Activated CD4-positive, alpha-beta T cell treated with anti-CD3 and anti-CD28 coated beads, Interleukin-2, amount 10 ng/mL, durations not matched to agents 7 days and 5 days (primary cell): ENCODE measurements at regions of chr2 and their contacts with region 1.

Region 1: DNA sequence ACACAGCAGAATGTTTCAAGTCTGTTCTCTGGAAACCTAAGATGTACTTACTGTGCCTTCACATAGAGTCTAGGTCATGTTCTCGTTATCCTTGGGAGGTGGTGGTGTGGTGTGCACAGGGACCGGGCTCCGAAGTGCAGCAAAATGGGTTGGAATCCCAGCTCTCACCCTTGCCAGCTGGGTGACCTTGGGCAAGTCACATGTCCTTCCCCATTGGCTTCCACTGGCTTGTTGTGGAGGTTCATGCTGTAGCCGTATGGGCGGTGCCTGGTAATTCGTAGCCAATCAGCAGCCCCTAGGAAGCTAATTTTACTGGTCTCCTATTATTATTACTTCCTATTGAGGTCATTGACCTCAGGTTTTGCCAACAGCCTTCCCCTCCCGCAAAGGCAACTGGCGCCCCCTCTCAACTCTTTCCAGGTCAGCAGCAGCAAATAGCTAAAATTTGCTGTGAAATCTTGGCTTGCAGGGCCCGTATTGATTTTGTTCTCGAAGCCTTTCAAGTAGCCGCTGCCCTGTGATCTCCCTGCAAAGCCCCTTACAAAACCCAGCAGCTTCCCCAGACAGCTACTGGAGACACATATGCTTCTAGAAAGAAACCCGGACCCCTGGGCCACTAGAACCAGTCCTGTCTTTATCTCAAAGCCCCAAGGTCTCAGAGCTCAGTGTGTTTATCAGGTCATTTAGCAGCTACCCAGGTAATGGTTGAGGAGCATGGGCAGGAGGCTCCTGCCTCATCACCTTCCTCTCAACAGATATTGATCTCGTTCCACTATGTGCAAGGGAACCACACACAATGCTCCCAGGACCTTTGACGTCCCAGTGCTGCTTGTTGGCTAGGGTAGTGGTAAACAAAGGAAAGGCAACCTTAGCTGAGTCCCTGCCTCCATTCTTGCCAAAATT is 66.5 kb upstream of the SLC1A4 start:
- DNase-seq: no peak
- H3K4me3 Mint-ChIP-seq: no peak overlapping the region
- H3K27ac Mint-ChIP-seq: no peak overlapping the region
- H3K4me1 Mint-ChIP-seq: peaks cover 18% of the 10 kb centered on the region
- H3K27me3 Mint-ChIP-seq: no peaks in the 10 kb centered on the region

Region 2: DNA sequence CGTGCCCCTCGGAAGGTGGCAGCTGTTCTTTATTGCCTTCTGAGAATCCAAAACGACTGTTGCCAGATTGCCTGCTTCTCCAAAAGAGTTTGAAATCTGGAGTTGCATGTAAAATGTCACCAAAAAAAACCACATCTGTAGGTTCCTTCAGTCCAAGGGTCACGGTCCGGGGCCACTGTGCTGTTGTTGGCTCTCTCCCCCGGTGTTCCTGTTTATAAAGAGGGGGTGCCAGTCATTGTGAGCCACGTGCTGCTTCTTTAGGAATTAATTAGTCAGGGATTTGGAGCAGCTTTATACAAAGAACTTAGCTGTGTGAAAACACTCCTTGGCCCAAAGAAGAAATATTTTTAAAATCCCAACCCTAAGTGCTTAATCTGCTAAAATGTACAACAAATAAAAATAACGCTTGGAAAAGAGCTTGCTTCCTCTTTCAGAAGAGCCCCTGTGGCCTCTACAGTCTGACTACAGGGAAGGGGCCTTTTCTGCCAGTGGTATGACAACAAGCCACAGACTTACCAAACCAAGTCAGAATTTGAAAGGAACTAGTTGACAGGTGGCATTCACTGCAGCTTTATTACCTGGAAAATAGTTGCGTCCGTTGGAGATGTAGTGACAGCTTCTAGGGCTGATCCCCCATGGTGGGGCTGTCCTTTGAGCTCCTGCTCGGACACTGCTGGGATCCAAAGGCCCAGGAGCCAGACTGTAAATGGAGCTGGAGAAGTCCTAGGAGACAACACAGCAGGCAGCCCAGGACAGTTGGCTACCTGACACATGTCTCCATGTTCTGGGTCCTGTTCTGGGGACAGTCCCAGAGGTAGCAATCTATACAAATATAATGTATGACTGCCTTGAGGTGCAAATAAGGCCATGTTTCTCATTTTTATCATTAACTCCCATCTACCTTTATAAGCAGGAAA is 18.1 kb before region 1 on chr2:
- CTCF ChIA-PET with region 1: interaction called, 34 read pairs
- POLR2A ChIA-PET with region 1: no interaction called
- DNase-seq: no peak
- H3K4me3 Mint-ChIP-seq: no peak overlapping the region
- H3K27ac Mint-ChIP-seq: no peak overlapping the region
- H3K4me1 Mint-ChIP-seq: peaks cover 6% of the 10 kb centered on the region
- H3K27me3 Mint-ChIP-seq: peaks cover 12% of the 10 kb centered on the region

Region 3: DNA sequence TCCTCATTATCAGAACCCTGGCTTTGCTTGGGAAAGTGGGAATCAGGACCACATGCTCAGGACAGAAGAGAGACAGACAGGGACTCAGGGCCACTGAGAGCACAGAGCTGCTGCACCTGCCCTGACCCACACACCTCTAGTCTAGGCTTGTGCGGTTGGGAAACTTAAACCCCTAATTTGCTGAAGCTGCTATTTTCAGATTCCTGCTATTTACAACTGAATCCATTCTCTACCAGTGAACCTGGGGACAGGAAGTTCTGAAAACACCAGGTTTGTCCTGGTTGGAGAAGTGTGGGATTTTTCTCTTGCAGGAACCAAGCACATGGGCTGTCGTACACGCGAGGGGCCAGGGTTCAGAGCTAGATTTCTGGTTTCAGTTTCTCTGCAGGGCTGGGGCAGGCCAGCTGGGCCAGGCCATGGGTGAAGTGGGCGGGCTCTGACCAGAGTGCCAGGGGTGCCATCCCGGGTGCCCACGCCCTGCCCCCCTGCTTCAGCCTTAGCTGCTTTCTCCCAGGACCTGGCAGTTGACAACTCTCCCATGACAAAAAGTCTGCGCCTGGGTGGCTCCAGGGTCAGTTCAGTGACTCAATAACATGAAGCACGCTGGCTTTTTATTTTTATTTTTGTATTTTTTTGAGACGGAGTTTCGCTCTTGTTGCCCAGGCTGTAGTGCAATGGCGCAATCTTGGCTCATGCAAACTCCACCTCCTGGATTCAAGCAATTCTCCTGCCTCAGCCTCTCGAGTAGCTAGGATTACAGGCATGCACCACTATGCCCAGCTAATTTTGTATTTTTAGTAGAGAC is 15.2 kb after region 1 on chr2:
- CTCF ChIA-PET with region 1: interaction called, 11 read pairs
- POLR2A ChIA-PET with region 1: no interaction called
- DNase-seq: no peak
- H3K4me3 Mint-ChIP-seq: no peak overlapping the region
- H3K27ac Mint-ChIP-seq: no peak overlapping the region
- H3K4me1 Mint-ChIP-seq: peaks cover 21% of the 10 kb centered on the region
- H3K27me3 Mint-ChIP-seq: peaks cover 4% of the 10 kb centered on the region

Region 4: GRCh38 chr2:64988420-64989125 is 65.8 kb after region 1 on chr2:
- CTCF ChIA-PET with region 1: interaction called, 21 read pairs
- POLR2A ChIA-PET with region 1: interaction called, 5 read pairs
- DNase-seq: peak; percentile 84
- H3K4me3 Mint-ChIP-seq: peak overlapping the region; percentile 73
- H3K27ac Mint-ChIP-seq: peak overlapping the region; percentile 76
- H3K4me1 Mint-ChIP-seq: peaks cover 65% of the 10 kb centered on the region
- H3K27me3 Mint-ChIP-seq: no peaks in the 10 kb centered on the region

Region 5: DNA sequence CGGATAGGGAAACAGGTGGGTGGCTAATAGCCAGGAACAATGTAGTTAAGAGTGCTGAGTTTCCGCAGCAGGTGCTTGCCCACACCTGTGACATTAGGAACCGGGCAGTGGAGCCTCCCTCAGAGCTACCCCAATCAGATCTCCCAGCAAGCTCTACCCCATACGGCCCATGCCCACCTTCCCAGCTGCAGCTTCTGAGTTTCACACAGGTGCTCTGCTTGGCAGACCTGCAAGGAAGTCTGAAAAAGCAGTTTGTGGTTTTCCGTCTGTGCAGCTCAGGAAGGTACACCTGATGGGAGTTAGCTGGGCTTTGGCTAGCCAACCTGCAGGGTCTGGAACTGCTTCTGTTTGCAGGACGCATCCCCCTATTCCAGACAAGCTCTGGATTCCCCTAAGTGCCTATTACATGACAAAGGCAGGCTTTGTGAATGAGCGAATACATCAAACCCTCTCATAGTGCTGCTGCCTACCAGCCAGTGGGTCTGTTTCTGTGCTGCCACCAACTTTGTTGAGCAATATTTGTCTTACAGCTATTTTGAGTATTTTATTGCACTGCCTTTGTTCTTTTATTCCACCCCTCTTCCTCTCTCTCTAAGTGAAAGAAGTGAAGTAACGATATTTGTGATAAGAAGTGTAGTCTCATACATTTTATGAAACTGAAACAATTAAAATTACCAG is 108.7 kb after region 1 on chr2:
- CTCF ChIA-PET with region 1: interaction called, 26 read pairs
- POLR2A ChIA-PET with region 1: interaction called, 10 read pairs
- DNase-seq: peak; percentile 11
- H3K4me3 Mint-ChIP-seq: peak overlapping the region; percentile 1
- H3K27ac Mint-ChIP-seq: peak overlapping the region; percentile 44
- H3K4me1 Mint-ChIP-seq: peaks cover 23% of the 10 kb centered on the region
- H3K27me3 Mint-ChIP-seq: no peaks in the 10 kb centered on the region

Region 6: DNA sequence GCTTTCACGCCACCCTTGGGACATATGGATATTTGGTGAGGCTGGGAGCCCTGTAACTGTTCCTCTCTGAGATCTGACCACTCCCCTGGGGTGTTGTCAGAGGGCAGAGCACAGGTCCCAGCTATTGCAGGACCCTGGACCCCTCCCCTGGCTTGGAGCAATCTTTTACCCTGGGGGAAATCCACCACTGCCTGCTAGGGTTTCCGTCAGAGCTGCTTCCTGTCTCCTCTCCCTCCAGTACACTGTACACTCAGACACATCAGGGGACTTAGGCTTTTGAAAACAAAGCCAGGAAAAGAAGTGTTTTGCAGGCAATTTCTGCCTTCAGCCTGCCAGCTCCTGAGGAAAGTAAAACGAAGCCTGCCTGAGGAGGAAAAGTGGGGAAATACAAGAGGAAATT is 120.2 kb after region 1 on chr2:
- CTCF ChIA-PET with region 1: interaction called, 19 read pairs
- POLR2A ChIA-PET with region 1: no interaction called
- DNase-seq: no peak
- H3K4me3 Mint-ChIP-seq: no peak overlapping the region
- H3K27ac Mint-ChIP-seq: no peak overlapping the region
- H3K4me1 Mint-ChIP-seq: peaks cover 16% of the 10 kb centered on the region
- H3K27me3 Mint-ChIP-seq: no peaks in the 10 kb centered on the region

Region 7: DNA sequence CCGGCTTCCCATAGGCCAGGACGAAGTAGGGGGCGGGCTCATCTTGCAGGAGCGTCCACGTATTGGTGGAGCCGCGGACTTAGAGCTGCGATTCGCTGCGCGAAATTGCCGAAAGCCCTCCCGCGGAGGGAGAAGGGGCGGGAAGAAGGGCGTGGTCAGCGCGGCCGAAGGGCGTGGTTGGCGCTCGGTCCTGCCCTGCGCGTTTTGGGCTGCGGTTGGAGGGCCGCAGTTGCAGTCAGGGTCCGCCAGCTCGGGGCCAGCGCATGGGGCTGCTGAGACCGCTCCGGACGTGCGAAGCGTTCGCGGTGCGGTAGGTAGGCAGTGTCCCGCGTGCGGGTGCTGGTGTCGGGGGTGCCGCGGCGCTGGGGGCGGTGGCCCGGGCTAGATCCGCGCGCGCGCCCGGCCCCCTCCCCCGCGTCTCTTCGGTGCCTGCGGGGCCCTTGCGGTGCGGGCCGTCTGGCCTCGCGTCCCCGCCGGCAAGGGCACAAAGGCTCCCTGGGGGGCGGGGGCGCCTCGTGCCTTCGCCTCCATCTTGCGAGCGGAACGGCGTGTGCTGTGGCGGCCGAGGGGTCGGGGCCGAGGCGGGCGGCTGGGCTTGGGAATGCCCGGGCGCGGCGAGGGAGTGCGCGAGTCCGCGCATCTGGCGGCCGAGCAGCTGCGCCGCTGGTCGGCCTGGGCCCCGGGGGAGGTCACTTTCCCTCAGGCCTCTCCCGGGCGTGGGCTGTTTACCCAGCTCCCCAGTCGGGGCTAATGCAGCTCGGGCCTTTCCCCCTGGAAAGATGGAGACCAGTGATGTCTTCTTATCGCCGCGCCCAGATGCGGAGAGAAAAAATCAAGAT is 133.7 kb after region 1 on chr2 and contains the start of gene CEP68:
- CTCF ChIA-PET with region 1: interaction called, 11 read pairs
- POLR2A ChIA-PET with region 1: no interaction called
- DNase-seq: peak; percentile 98
- H3K4me3 Mint-ChIP-seq: peak within 1 kb of the TSS; percentile 92
- H3K27ac Mint-ChIP-seq: peak within 1 kb of the TSS; percentile 88
- H3K4me1 Mint-ChIP-seq: peaks cover 59% of the 10 kb centered on the region
- H3K27me3 Mint-ChIP-seq: no peaks in the 10 kb centered on the region
- total RNA-seq, gene CEP68: 9.0 to 9.2 TPM